ENCODE measurements at regions of chr12 and their contacts with region 1.

Region 1: GRCh38 chr12:38392581-38393144 is 76.1 kb downstream of the ALG10B start:
- DNase-seq: peak; percentile 29
- H3K4me3 Mint-ChIP-seq: no peak overlapping the region
- H3K27ac Mint-ChIP-seq: no peak overlapping the region
- H3K4me1 Mint-ChIP-seq: no peaks in the 10 kb centered on the region
- H3K27me3 Mint-ChIP-seq: no peaks in the 10 kb centered on the region
- CTCF ChIP-seq: no peak

Region 2: DNA sequence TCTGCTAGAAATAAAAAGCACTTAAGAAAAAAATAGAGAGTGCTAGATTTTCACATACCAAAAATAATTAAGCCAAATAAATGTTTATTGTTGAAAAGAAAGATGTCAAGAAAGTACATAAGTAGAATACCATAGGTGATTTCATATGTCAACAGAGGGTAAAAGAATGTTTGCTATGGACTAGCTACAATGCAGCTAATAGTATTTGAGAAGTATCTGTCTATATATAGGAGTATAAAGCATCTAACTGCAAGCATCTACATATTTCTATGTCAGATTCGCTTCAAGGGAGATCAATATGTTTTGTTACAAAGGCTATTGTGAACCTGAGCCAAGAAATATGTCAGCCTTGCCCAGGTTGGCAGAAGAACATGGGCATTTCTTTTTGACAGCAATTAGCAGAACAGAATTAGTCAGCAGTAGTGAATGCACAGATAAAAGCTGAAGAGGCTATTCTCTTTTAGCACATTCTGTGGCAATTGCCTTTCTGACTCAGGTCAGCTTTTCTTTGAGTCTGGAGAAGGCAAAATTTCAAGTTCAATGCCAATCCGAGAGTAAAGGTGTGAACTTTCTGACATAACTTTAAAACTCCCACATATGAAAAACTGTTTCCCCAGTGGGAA is 64.0 kb after region 1 on chr12:
- CTCF ChIA-PET with region 1: no interaction called
- intact Hi-C with region 1: loop called (anchors 10 kb)
- DNase-seq: no peak
- H3K4me3 Mint-ChIP-seq: no peak overlapping the region
- H3K27ac Mint-ChIP-seq: no peak overlapping the region
- H3K4me1 Mint-ChIP-seq: no peaks in the 10 kb centered on the region
- H3K27me3 Mint-ChIP-seq: no peaks in the 10 kb centered on the region
- CTCF ChIP-seq: no peak